ENCODE measurements at regions of chr20 and their contacts with region 1.

Region 1: DNA sequence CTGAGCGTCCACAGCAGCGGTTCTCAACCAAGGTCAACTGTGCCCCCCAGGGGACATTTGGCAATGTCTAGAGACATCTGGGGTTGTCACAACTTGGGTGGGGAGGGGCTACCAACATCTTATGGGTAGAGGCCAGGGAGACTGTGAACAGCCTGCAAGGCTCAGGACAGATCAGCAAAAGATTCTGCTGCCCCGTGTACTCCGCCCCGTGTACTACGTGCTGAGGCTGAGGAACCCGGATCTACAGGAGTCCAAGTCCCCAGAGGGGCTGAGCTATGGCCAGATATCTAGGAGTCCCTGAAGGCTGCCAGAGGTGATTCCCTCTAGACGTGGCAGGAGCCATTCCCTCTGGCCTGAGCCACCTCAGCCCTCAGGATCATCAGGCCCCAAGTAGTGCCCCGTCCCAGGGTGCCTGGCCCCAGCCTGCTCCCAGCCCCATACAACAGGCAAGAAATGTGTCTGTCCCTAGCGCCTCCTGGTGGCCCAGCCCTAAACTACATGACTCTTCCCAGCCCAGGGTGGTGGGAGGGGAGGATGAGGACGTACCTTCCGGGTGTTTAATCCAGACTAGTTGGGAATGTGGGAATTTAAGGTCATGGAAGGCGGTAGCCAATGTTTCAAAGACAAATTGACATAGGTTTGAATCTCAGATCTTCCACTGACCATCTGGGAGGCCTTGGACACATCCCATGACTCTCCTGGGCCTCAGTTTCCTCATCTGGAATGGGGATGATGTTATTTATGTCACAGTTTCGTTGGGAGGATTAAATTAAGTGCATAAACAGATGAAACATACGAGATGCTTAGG is 49.5 kb upstream of the PTPN1 start:
- DNase-seq: peak; percentile 80 to 90
- ATAC-seq: peak; percentile 80 to 82
- H3K4me3 ChIP-seq: no peak overlapping the region
- H3K27ac ChIP-seq: peak overlapping the region; percentile 68 to 80 (median 78)
- H3K4me1 ChIP-seq: peaks cover 18 to 21% of the 10 kb centered on the region in 2 donors
- H3K27me3 ChIP-seq: no peaks in the 10 kb centered on the region
- CTCF ChIP-seq: peak; percentile 91 to 99 (median 95)
- POLR2A ChIP-seq: no peak

Region 2: DNA sequence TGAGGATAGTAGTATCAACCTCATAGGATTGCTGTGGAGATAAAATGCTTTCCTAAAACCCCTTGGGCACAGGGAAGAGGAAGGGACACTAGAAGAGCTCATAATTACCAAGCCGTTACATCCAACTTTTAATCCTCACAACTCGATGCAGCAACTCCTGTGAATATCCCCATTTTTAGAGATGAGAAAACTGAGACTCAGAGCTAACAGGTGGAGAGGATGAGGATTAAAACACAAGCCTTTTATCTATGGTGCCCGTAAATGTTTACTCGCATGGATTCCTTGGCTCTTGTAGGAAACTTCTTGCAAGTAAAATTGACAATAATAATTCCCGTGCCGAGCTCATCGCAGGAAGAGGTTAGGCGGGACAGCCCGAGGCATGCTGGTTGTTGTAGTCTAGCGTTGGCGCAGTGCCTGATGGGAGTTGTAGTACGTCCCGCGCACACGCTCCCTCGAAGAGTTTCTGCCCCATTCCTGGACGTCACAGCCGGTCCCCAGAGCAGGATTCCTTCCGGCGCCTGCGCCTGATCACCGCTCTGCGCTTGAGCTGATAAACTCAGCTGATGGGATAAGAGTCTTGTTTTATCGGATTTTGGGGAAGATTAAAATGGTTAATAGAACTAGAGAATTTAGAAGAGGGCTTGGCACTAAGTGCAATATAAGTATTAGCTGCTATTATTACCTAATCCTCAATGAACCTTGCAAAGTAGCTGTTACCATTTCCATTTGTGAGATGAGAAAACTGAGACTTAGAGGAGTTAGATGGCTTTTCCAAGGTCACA is 344.9 kb before region 1 on chr20:
- in situ Hi-C with region 1: no loop called
- intact Hi-C with region 1: loop called (anchors 10 kb)
- DNase-seq: peak; percentile 97
- ATAC-seq: peak; percentile 85 to 87
- H3K4me3 ChIP-seq: peak overlapping the region; percentile 55 to 63 (median 59)
- H3K27ac ChIP-seq: peak overlapping the region; percentile 80 to 98 (median 88)
- H3K4me1 ChIP-seq: peaks cover 37 to 40% of the 10 kb centered on the region in 2 donors
- H3K27me3 ChIP-seq: no peaks in the 10 kb centered on the region
- CTCF ChIP-seq: no peak
- POLR2A ChIP-seq: peak; percentile 45 to 51

Region 3: GRCh38 chr20:50278674-50279531 is 181.8 kb before region 1 on chr20:
- in situ Hi-C with region 1: loop called in 2 of 4 experiments (anchors 25 kb)
- intact Hi-C with region 1: loop called (anchors 2 kb)
- DNase-seq: peak; percentile 91 to 98
- ATAC-seq: peak; percentile 79 to 85
- H3K4me3 ChIP-seq: no peak overlapping the region
- H3K27ac ChIP-seq: peak overlapping the region; percentile 87 to 96 (median 92)
- H3K4me1 ChIP-seq: peaks cover 43 to 50% of the 10 kb centered on the region in 2 donors
- H3K27me3 ChIP-seq: no peaks in the 10 kb centered on the region
- CTCF ChIP-seq: peak; percentile 46 to 54 (median 49)
- POLR2A ChIP-seq: peak; percentile 52 to 63

Region 4: GRCh38 chr20:50292324-50293243 is 168.1 kb before region 1 on chr20:
- in situ Hi-C with region 1: loop called in 2 of 4 experiments (anchors 25 kb)
- intact Hi-C with region 1: no loop called
- DNase-seq: peak; percentile 89 to 92
- ATAC-seq: peak; percentile 76 to 84
- H3K4me3 ChIP-seq: no peak overlapping the region
- H3K27ac ChIP-seq: peak overlapping the region; percentile 83 to 95 (median 85)
- H3K4me1 ChIP-seq: peaks cover 19 to 21% of the 10 kb centered on the region in 2 donors
- H3K27me3 ChIP-seq: no peaks in the 10 kb centered on the region
- CTCF ChIP-seq: no peak
- POLR2A ChIP-seq: peak; percentile 32

Region 5: DNA sequence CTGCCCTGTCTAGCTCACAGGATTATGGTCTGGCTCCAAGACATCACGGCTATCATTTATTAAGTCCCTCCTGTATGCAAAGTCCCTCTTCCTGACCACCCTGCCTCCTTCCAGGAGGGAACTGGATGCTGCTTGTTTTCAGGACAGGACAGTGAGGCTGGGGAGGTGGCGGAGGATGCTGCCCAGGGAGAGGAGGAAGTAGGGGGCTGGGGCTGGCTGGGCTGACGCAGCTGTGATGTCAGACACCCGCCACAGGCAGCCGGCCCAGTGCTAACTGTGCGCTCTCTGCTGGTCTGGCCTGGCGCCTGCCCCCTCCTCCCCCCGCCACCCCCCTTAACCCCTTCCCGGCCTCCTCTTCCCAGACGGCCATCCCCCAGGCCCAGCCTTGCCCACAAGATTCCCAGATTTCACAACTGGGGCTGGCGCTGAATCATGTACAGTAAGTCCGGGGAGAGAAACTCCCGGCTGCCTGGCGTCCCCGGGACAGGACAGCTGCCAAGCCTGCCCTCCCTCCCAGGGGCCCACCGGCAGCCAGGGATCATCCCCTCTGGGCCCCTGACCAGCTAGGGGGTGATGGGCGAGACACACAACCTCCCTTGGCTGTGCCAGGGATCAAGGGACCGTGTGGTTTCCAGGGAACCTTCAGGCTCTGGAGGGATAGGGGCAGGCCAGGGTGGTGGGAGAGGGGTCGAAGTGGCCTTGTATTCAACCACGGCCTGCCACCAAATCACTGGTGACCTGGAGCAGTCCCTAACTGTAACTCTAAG is 152.0 kb before region 1 on chr20:
- in situ Hi-C with region 1: no loop called
- intact Hi-C with region 1: loop called (anchors 5 kb)
- DNase-seq: peak; percentile 79 to 87
- ATAC-seq: peak; percentile 19 to 27
- H3K4me3 ChIP-seq: no peak overlapping the region
- H3K27ac ChIP-seq: peak overlapping the region; percentile 87 to 95 (median 90)
- H3K4me1 ChIP-seq: peaks cover 49 to 53% of the 10 kb centered on the region in 2 donors
- H3K27me3 ChIP-seq: no peaks in the 10 kb centered on the region
- CTCF ChIP-seq: no peak
- POLR2A ChIP-seq: peak; percentile 53 to 67

Region 6: DNA sequence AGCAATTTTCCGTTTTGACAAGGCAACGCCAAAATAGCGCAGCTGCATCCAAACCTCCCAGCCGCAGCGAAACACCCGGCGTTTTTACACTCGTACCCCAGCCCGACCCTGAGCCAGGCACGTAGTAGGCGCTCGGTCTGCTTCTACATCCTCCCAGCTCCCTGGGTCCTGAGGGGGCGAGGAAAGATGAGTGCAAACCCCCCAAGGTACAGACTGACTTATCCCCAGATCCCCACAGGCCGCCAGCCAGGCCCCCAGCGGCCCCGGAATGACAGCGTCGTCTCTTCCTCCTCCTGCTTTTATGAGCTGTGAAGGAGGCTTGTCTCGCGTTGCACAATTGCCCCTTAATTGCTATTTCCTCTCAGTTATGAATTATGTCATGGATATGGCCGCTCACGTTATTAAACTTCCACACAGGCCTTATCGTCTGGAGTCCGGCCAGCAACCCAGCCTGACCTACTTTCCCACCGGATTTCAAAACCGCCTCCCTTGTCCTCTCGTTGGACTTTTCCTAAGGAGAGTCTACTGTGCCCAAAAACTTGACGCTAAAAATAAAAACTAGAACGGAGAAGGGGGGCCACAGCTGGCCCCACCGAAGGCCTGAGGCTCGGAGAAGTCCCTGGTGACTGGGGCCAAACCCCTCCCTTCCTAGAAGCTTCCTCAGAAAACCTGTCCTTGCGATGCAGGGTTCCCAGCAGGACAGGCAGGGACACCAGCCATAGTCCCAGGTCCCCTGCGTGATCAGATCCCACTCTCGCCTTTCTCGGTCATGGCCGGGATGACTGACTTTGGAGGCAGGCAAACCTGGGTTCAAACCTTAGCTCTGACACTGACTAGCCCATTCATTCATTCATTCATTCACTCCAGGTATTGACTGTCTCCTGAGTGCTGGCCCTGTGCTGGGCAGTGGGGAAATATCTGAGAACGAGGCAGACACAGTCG is 81.3 kb before region 1 on chr20:
- in situ Hi-C with region 1: loop called in 1 of 4 experiments (anchors 5 kb)
- intact Hi-C with region 1: loop called (anchors 2 kb)
- DNase-seq: peak; percentile 97 to 99
- ATAC-seq: peak; percentile 89
- H3K4me3 ChIP-seq: peak overlapping the region; percentile 26 to 50 (median 40)
- H3K27ac ChIP-seq: peak overlapping the region; percentile 89 to 93 (median 92)
- H3K4me1 ChIP-seq: peaks cover 30 to 42% of the 10 kb centered on the region in 2 donors
- H3K27me3 ChIP-seq: no peaks in the 10 kb centered on the region
- CTCF ChIP-seq: no peak
- POLR2A ChIP-seq: peak; percentile 96 to 98

Region 7: DNA sequence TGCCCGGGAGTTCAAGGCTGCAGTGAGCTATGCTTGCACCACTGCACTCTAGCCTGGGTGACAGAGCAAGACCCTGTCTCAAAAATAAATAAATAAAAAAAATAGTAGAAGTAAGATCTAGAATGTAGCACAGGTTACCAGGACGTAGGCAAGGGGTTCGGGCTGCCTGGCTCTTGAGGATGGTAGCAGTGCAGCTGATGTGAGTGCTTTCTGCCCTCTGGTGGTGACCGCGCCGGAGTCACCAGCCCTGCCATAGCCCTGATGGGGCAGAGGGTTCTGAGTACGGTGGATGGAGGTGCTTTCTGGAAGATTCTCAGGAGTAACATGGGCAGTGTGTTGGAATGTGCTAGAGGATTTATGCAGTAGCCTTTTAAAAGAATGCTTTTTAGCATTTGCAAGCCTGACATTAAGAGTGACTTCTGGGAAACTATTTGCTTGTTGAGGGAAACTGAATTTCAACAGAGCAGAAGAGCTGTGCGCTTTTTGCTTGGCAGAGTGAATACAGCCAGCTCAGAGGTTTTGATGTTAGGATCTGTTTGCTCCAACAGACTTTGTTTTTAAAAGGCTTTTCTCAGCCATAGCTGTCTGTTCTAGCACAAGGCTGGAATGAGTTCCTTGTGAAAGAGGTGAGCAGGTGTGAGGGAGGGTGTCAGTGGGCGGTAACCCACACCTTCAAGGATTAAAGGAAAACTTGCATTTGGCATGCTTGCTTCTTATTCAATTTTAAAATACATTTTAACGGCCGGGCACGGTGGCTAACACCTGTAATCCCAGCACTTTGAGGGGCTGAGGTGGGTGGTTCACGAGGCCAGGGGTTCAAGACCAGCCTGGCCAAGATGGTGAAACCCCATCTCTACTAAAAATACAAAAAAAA is 115.4 kb after region 1 on chr20:
- in situ Hi-C with region 1: loop called in 2 of 4 experiments (anchors 5 to 10 kb)
- intact Hi-C with region 1: loop called (anchors 5 kb)
- DNase-seq: peak; percentile 56 to 81
- ATAC-seq: peak; percentile 20 to 32
- H3K4me3 ChIP-seq: no peak overlapping the region
- H3K27ac ChIP-seq: peak overlapping the region; percentile 89 to 96 (median 92)
- H3K4me1 ChIP-seq: peaks cover 66 to 68% of the 10 kb centered on the region in 2 donors
- H3K27me3 ChIP-seq: no peaks in the 10 kb centered on the region
- CTCF ChIP-seq: peak; percentile 54 to 84 (median 78)
- POLR2A ChIP-seq: no peak

Measured in gastrocnemius medialis (tissue), 4 donors.